HEK293 (cell line): ENCODE measurements at regions of chr6 and their contacts with region 1.

Region 1: DNA sequence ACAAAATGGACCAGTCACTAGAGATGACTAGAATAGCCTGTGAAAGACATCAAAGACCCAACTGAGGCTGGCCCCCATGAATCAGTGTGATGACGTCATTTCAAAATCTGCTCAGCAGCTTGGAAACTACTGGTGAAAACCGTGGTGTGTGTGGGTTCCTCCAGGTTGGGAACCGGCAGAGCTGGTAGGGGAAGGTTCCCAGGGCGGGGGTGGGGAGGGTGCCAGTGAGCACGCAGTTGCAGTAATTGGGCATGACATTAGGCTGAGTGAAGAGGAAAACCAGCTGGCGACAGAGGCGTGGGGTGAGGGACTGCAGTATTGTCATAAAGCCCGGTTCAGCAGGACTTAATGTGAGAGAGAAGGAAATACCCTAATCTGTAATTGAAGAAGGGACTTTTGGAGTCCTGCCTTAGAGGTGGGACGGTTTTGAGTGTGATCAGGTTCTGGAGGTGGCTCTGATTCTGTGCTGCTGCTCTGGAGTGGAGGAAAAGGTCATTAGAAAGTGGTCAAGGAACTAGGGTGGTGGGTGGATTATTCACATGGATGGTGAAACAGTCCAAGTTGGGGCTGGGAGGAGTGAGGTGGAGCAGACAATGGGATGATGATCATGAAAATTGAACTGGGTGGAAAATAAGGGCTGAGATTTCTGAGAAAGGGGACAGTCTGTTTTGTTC is 52.0 kb upstream of the MTHFD1L start:
- H3K4me3 ChIP-seq: no peak overlapping the region
- H3K27ac ChIP-seq: no peak overlapping the region; the same call in 1 of the 2 replicates
- H3K4me1 ChIP-seq: peaks cover 11% of the 10 kb centered on the region; the same call in 1 of the 2 replicates
- CTCF ChIP-seq: no peak

Region 2: GRCh38 chr6:150409576-150410066 is 403.8 kb before region 1 on chr6:
- CTCF ChIA-PET with region 1: interaction called, 48 read pairs
- POLR2A ChIA-PET with region 1: no interaction called
- H3K4me3 ChIP-seq: no peak overlapping the region
- H3K27ac ChIP-seq: peak overlapping the region; percentile 44; the same call in 1 of the 2 replicates
- H3K4me1 ChIP-seq: peaks cover 26% of the 10 kb centered on the region
- CTCF ChIP-seq: no peak

Region 3: DNA sequence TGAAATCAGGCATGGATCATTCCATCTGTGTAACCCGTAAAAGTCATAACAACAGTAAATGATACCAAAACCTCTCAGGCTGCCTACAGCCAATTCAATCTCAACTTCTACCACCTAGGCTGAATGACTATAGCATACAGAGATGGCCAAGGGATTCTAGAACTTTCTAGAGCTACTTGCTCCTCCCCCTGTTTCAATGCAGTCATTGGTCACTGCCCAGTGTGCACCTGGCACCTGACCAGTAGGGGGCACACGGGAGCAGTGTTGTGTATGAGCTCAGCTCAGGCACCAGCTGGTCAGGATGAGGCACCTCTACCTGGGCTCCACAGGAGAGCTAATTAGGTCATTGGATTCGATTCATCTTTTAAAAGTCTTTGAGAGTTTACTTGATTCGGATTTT is 127.6 kb before region 1 on chr6:
- CTCF ChIA-PET with region 1: interaction called, 26 read pairs
- POLR2A ChIA-PET with region 1: no interaction called
- H3K4me3 ChIP-seq: no peak overlapping the region
- H3K27ac ChIP-seq: no peak overlapping the region
- H3K4me1 ChIP-seq: peaks cover 12% of the 10 kb centered on the region; the same call in 1 of the 2 replicates
- CTCF ChIP-seq: peak; percentile 59; the same call in 1 of the 2 replicates

Region 4: DNA sequence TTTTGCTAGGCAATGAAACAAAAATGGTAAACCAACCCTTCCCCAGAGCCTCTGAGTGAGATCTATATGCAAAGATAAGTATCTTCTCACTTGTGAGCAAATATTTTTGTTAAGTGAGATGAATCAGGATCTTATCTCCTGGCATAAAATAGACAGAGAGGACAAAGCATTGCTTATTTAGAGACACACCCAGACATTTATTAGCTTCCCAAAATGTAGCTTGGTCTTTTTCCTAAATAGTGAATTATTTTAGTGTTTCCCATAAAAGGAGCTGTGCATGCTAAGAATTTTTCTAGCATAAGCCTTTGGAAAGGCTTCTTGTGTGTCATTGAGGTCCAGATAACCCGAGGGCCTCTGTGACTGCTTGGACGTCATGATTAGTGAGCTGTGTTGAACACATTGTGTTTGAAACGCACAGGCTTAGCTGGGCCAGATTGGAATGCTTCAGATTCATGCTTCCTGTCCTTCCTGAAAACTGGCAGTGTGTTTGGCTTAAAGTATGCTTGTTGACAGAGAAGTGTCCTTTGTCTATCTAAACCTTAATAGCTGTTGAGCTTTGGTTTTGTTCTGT is 68.5 kb after region 1 on chr6:
- CTCF ChIA-PET with region 1: interaction called, 58 read pairs
- POLR2A ChIA-PET with region 1: no interaction called
- H3K4me3 ChIP-seq: no peak overlapping the region
- H3K27ac ChIP-seq: peak overlapping the region; percentile 4
- H3K4me1 ChIP-seq: peaks cover 6% of the 10 kb centered on the region
- CTCF ChIP-seq: no peak

Region 5: GRCh38 chr6:150967910-150968309 is 154.5 kb after region 1 on chr6:
- CTCF ChIA-PET with region 1: no interaction called
- POLR2A ChIA-PET with region 1: no interaction called
- H3K4me3 ChIP-seq: no peak overlapping the region
- H3K27ac ChIP-seq: no peak overlapping the region
- H3K4me1 ChIP-seq: no peaks in the 10 kb centered on the region
- CTCF ChIP-seq: no peak

Region 6: DNA sequence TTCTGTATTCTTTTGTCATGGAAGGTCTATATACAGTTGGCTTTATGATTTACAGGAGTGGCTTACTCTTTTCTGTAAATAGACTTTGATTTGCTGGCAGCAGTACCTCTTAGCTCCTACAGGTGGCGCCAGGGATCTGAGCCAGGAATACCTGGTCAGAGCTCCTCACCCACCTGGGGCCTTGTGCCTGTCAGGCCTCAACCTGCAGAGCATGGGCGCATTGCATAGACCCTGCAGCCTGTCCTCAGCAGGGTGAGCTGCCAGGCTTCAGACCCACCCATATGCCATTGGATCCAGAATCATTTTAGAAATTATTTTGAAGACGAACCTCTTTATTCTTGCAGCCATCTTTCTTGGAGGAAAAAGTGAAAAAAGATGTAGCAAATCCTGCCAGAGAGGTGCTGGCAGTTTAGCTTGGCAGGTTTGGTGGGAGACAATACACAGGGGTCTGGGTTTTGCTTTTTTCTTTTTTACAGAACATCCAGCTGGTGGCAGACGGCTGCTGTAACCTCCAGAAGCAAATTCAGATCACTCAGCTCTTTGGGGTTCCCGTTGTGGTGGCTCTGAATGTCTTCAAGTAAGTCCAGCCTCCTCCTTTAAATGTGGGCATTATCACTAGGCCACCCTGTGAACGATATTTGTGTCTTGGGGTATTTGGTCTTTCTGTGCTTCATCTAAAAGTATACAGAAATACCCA is 201.1 kb after region 1 on chr6:
- CTCF ChIA-PET with region 1: interaction called, 13 read pairs
- POLR2A ChIA-PET with region 1: interaction called, 4 read pairs
- H3K4me3 ChIP-seq: no peak overlapping the region
- H3K27ac ChIP-seq: no peak overlapping the region
- H3K4me1 ChIP-seq: no peaks in the 10 kb centered on the region
- CTCF ChIP-seq: peak; percentile 68